ENCODE measurements at regions of chr16 and their contacts with region 1.

Region 1: GRCh38 chr16:19288872-19289799 is 3.6 kb downstream of the CLEC19A start:
- DNase-seq: no peak
- ATAC-seq: no peak
- H3K4me3 ChIP-seq: no peak overlapping the region
- H3K4me3 Mint-ChIP-seq: no peak overlapping the region
- H3K27ac ChIP-seq: no peak overlapping the region
- H3K27ac Mint-ChIP-seq: no peak overlapping the region
- H3K4me1 ChIP-seq: no peaks in the 10 kb centered on the region
- H3K4me1 Mint-ChIP-seq: peaks cover 0 to 1% (median under 1%) of the 10 kb centered on the region in 3 donors
- H3K27me3 ChIP-seq: peaks cover 0 to 11% of the 10 kb centered on the region in 2 experiments
- H3K27me3 Mint-ChIP-seq: peaks cover 12 to 13% of the 10 kb centered on the region in 2 donors

Region 2: DNA sequence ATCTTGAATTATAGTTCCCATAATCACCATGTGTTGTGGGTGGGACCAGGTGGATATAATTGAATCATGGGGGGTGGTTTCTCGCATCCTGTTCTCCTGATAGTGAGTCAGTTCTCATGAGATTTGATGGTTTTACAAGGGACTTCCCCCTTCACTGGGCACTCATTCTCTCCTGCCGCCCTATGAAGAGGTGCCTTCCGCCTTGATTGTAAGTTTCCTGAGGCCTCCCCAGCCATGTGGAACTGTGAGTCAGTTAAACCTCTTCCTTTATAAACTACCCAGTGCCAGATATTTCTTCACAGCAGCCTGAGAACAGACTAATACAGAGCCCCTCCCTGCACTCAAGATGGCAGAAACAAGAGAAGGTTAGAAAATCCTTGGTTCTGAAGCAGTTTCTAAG is 1895.7 kb after region 1 on chr16:
- CTCF ChIA-PET with region 1: no interaction called
- POLR2A ChIA-PET with region 1: interaction called in 1 of 2 experiments, 13 read pairs
- DNase-seq: no peak
- ATAC-seq: no peak
- H3K4me3 ChIP-seq: no peak overlapping the region
- H3K4me3 Mint-ChIP-seq: no peak overlapping the region
- H3K27ac ChIP-seq: no peak overlapping the region
- H3K27ac Mint-ChIP-seq: no peak overlapping the region
- H3K4me1 ChIP-seq: peaks cover 0 to 8% of the 10 kb centered on the region in 2 experiments
- H3K4me1 Mint-ChIP-seq: peaks cover 0 to 4% (median 2%) of the 10 kb centered on the region in 3 donors
- H3K27me3 ChIP-seq: peaks cover 0 to 10% of the 10 kb centered on the region in 2 experiments
- H3K27me3 Mint-ChIP-seq: peaks cover 0 to 2% of the 10 kb centered on the region in 2 donors

Measured in T-cell (primary cell).